ENCODE measurements at regions of chr14 and their contacts with region 1.

Region 1: DNA sequence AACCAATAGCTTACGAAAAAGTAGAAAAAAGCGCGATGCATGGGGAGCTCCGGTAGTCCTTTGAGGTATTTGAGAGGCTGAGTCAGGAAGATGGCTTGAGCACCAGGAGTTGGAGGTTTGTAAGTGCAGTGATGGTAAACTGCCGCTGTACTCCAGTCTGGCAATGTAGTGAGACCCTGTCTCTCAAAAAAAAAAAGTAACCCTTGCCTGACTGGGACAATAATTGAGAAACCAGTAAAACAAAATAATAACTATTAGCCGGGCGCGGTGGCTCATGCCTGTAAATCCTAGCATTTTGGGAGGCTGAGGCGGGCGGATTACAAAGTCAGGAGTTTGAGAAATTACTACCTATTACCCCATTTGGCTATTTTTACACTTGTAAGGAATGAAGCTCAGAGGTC is 632 bp upstream of the ACOT2 start:
- DNase-seq: no peak
- ATAC-seq: no peak
- H3K4me3 Mint-ChIP-seq: peak overlapping the region; percentile 78
- H3K27ac Mint-ChIP-seq: no peak overlapping the region
- H3K4me1 Mint-ChIP-seq: peaks cover 30% of the 10 kb centered on the region
- H3K27me3 Mint-ChIP-seq: peaks cover 13% of the 10 kb centered on the region
- CTCF ChIP-seq: no peak

Region 2: GRCh38 chr14:73208390-73208789 is 360.0 kb before region 1 on chr14:
- CTCF ChIA-PET with region 1: no interaction called
- POLR2A ChIA-PET with region 1: no interaction called
- DNase-seq: no peak
- ATAC-seq: no peak
- H3K4me3 Mint-ChIP-seq: no peak overlapping the region
- H3K27ac Mint-ChIP-seq: no peak overlapping the region
- H3K4me1 Mint-ChIP-seq: peaks cover 3% of the 10 kb centered on the region; the same call in 1 of the 2 replicates
- H3K27me3 Mint-ChIP-seq: no peaks in the 10 kb centered on the region
- CTCF ChIP-seq: no peak

Region 3: DNA sequence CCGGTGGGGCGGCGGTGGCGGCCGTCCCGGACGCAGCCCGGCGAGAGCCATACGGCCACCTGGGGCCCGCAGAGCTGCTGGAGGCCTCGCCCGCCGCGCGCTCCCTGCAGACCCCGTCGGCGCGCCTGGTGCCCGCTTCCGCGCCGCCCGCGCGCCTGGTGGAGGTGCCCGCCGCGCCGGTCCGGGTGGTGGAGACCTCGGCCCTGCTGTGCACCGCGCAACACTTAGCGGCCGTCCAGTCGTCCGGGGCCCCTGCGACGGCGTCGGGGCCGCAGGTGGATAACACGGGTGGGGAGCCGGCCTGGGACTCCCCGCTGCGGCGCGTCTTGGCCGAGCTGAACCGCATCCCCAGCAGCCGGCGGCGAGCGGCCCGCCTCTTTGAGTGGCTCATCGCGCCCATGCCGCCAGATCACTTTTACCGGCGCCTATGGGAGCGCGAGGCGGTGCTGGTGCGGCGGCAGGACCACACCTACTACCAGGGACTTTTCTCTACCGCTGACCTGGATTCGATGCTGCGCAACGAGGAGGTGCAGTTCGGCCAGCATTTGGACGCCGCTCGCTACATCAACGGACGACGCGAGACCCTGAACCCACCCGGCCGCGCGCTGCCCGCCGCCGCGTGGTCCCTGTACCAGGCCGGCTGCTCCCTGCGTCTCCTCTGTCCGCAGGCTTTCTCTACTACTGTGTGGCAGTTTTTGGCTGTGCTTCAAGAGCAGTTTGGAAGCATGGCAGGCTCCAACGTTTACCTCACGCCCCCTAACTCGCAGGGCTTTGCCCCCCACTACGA is 76.9 kb before region 1 on chr14:
- CTCF ChIA-PET with region 1: interaction called, 9 read pairs
- POLR2A ChIA-PET with region 1: interaction called, 12 read pairs
- DNase-seq: peak; percentile 65
- ATAC-seq: peak; percentile 36
- H3K4me3 Mint-ChIP-seq: peak overlapping the region; percentile 85
- H3K27ac Mint-ChIP-seq: no peak overlapping the region
- H3K4me1 Mint-ChIP-seq: peaks cover 28% of the 10 kb centered on the region
- H3K27me3 Mint-ChIP-seq: no peaks in the 10 kb centered on the region
- CTCF ChIP-seq: no peak

Region 4: DNA sequence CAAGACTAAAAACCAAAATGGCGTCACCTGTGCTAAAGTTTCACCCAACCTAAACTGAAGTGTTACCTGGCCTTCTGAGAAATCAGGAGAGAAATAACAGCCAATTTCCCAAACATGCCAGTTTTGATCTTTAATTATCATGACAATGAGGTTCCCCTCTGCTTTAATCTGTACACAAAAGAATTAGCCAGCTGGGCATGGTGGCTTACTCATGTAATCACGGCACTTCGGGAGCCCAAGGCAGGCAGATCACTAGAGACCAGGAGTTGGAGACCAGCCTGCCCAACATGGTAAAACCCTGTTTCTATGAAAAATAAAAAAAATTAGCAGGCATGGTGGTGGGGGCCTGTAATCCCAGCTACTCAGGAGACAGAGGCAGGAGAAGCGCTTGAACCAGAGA is 14.5 kb before region 1 on chr14:
- CTCF ChIA-PET with region 1: no interaction called
- POLR2A ChIA-PET with region 1: no interaction called
- DNase-seq: no peak
- ATAC-seq: no peak
- H3K4me3 Mint-ChIP-seq: no peak overlapping the region
- H3K27ac Mint-ChIP-seq: no peak overlapping the region
- H3K4me1 Mint-ChIP-seq: 0 out of 2 replicates have a peak, but pooled peaks cover 3% of the 10 kb centered on the region
- H3K27me3 Mint-ChIP-seq: no peaks in the 10 kb centered on the region
- CTCF ChIP-seq: no peak

Measured in WTC11 (cell line).